Lower leg skin (tissue), 4 donors: ENCODE measurements at regions of chr2 and their contacts with region 1.

Region 1: GRCh38 chr2:48530033-48530804 is at the start of gene STON1:
- DNase-seq: peak in 1 of 2 donors; percentile 88
- H3K4me3 ChIP-seq: peak within 1 kb of the TSS; percentile 49
- CTCF ChIP-seq: no peak
- POLR2A ChIP-seq: no peak
- total RNA-seq, gene STON1: 4.1 to 9.7 (median 8.1) TPM

Region 2: DNA sequence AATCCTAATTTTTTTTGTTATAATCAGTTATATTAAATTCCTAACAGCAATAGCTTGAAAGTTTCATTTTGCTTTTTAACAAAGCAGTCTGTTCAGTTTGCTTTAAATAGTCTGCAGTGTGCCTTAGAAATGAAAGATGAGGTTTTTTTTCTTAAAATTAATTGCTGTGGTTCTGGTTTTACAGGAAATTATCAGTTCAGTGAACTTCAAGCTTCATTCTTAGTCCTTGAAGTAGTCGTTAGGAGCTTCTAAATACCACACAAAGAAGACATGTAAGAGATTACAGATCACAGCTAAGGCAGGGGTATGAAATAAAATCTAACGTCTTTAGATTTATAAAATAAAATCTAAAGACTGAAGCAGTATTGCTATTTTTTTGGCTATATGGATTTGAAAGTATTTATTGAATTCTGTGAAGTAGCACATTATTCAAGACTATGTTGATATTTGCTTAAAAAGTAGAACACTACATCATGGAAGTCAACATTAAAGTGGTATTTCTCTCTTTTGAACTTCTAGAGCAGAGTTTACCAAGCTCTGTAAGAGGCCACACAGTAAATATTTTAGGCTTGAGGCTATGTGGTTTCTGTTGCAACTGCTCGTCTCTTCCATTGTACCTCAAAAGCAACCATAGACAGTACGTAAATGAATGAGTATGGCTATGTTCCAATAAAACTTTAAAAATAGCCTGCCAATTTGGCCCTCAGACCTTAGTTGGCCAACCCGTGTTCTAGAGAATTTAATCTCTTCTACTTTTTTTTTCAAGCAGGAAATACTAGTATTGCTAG is 81.8 kb before region 1 on chr2:
- intact Hi-C with region 1: no loop called
- DNase-seq: no peak
- H3K4me3 ChIP-seq: no peak overlapping the region
- CTCF ChIP-seq: no peak
- POLR2A ChIP-seq: no peak

Region 3: DNA sequence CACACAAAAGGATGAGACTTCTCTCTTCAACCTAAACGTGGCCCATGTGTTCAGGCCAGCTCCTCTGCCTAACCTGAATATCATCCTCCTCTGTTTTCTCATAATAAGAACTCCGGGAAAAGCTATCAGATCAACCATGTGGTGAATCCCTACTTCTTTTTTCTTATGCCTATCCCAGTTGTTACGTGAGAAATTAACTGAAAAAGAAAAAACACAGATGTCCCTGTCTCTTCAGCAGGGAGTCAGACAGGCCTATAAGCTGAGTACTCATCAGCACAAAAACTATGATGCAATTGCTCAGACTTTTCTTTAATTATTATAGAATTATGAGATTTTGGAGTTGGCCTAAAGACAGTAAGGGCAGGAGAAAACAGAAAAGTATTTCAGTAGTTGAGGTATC is 1237.1 kb after region 1 on chr2:
- intact Hi-C with region 1: loop called (anchors 5 kb)
- DNase-seq: no peak
- H3K4me3 ChIP-seq: no peak overlapping the region
- CTCF ChIP-seq: no peak
- POLR2A ChIP-seq: no peak